GM18951 (cell line): ENCODE measurements at regions of chr1 and their contacts with region 1.

Region 1: DNA sequence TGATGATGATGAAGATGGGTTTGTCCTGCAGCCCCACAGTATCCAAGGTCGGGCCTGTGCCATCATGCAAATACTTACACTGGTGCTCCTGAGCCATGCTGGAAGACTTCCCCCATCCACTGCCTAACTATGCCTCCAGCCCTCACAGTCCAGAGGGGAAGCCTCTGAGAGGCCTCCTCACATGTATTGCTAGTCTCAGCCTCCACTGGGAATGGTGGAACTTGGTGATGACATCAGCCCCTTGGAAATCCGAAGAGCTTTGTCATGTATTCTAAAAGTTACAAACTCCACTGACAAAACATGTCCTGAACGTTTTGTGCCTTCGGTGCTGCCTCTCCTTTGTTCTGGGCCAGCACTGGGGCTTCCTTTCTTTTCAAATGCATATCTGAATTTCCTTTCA is 61.1 kb upstream of the DMRTB1 start:
- POLR2A ChIP-seq: no peak

Region 2: GRCh38 chr1:53172426-53173128 is 225.5 kb before region 1 on chr1:
- in situ Hi-C with region 1: no loop called
- POLR2A ChIP-seq: no peak

Region 3: DNA sequence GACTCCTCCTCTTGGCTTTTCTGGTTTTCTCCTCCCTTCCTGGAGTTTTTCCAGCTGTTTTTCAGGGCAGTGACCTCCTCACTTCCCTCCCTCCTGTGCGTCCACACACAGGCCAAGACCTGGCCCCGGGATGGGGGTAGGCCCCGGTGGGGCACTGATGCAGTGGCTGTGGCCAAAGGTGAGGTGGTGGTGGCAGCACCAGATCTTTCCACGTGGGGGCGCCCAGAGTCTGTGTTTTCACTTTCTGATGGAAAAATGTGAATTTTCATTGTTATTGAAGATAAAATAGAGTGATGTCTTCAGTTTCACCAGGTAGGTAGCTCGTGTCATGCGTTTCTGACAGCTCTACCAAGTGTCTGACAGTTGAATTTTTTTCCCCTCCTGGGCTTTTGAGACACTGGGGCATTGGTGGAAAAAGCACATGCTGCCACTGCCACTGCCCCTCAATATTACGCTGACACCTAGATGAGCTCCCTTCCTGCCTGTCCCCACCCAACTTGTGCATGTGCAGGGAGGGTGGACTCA is 119.8 kb before region 1 on chr1:
- in situ Hi-C with region 1: loop called (anchors 5 kb)
- POLR2A ChIP-seq: no peak

Region 4: DNA sequence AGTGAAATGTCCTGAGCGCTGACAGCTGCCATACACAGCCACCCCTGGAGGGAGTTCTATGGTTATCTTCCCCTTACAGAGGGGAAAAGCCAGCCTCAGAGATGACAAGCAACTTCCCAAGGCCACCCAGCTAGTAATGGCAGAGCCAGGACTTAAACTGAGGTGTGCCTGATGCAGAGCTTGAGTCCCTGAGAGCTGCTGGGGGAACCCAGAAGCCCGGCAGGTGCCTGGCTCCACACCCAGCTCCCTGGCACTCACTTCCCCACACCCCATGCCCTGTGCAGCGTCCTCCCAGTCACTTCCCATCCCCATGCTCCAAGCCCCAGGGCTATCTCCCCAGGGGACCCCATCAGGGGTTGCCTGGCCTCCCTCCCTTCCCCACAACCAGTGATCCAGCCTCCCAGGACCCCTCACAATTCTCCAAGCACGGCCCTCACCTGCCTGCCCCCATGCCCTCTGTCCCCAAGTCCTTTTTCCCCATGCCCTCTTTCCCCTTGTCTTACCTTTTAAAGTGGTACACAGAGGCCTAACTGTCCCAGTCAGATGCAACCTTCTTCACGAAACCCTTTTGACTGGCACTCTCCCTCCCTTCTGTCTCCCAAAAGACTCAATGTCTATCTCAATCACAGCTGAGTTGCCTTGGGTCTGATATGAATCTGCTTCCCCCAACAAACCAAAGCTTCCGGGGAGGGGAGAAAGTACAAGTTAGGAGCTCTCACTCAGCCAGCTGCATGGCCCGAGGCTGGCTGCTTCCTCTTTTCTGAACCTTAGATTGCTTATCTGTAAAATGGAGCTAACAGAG is 30.4 kb before region 1 on chr1:
- in situ Hi-C with region 1: no loop called
- POLR2A ChIP-seq: peak; percentile 23